Heart left ventricle (tissue), 16 donors: ENCODE measurements at regions of chr4 and their contacts with region 1.

Region 1: DNA sequence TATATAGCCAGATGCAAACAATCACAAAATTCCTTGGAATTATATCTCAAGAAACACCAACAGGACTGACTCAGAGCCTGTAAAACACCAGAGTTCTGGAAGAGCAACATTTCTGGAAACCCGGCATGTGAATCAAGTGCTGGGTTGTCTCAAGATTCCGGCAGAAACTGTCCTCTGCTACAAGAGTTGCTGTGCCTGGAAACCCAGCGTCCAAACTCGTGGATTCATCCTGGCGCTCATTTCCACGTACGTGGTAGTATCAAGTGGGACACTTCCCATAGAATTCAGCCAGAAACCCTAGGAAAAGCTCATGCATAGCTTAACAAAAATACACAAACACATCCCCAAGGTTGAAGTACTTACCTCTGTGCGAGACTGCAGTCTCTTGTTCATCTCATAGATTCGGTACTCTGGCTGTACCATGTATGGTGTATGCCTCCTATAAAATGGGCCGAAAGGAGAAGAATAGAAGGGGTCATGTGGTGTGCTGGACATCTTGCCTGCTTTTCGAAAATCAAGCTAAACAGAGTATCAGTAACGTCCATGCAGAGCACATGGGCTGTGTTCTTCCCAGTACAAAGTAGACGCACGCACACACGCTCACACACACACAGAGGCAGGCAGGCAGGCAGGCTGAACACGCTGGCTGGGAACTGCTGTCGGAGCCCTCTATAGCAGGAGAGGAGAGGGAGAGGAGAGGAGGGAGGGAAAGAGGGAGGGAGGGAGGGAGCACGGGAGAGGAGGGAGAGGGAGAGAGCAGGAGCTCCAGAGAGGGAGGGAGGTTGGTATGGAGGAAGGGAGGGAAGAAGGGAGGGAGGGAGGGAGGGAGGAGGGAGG is at the start of gene LDB2:
- DNase-seq: peak; percentile 67 to 85 (median 78)
- ATAC-seq: peak; percentile 92 to 96 (median 92)
- H3K4me3 ChIP-seq: peak within 1 kb of the TSS; percentile 34 to 87 (median 62)
- H3K27ac ChIP-seq: peak within 1 kb of the TSS; percentile 46 to 87 (median 77)
- H3K4me1 ChIP-seq: peaks cover 0 to 25% (median 5%) of the 10 kb centered on the region in 12 donors
- H3K27me3 ChIP-seq: no peaks in the 10 kb centered on the region
- CTCF ChIP-seq: no peak
- POLR2A ChIP-seq: no peak
- total RNA-seq, gene LDB2: 9.5 to 38.7 (median 26.6) TPM

Region 2: DNA sequence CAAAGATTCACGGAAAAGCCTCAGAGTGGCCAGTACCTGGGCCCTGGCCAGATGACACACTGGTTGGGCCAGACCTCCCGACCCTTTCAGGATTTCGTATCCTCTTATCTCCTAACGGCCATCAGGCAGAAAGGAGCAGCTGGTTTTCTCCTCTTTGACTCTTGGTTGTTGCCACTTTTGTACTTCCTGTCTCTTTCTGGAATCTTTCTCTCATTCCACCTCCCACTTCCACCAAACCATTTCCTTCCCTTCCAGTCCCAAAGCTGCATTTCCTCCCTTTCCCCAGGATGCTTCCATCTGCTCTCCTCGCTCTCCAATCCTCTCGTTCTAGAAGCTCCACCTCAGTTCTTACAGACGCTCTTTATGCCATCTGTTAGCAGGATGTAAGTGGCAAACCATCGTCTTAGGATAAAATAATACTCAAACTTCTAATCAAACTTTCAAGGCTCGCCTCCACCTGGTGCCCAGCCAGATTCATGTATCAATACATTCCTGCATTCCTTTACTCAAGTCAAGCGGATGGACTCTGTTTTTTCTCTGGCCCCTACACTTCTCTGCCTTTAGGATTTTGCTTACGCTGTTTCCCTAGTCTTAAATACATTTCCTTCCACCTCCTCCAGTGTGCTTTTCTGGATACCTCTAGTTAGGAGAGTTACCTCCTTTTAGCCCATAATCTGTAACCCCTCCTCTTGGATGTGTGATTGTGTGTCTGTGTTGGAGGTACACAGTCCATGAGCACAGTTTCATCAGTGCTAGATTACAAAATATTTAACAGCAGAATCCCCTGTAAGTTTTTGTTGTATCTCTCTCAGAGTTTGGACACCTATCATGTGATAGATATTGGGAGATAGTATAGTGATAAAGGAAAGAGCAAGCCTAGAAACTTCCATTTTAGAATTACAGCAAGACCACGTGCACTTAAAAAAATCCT is 70.2 kb before region 1 on chr4:
- intact Hi-C with region 1: loop called in 2 of 10 experiments (anchors 5 to 10 kb)
- DNase-seq: peak in 4 of 5 donors; percentile 14 to 52 (median 35)
- ATAC-seq: peak; percentile 25 to 73 (median 51)
- H3K4me3 ChIP-seq: peak overlapping the region in 2 of 12 donors; percentile 2 to 8
- H3K27ac ChIP-seq: peak overlapping the region; percentile 26 to 75 (median 55)
- H3K4me1 ChIP-seq: peaks cover 0 to 24% (median 11%) of the 10 kb centered on the region in 12 donors
- H3K27me3 ChIP-seq: no peaks in the 10 kb centered on the region
- CTCF ChIP-seq: no peak
- POLR2A ChIP-seq: no peak

Region 3: DNA sequence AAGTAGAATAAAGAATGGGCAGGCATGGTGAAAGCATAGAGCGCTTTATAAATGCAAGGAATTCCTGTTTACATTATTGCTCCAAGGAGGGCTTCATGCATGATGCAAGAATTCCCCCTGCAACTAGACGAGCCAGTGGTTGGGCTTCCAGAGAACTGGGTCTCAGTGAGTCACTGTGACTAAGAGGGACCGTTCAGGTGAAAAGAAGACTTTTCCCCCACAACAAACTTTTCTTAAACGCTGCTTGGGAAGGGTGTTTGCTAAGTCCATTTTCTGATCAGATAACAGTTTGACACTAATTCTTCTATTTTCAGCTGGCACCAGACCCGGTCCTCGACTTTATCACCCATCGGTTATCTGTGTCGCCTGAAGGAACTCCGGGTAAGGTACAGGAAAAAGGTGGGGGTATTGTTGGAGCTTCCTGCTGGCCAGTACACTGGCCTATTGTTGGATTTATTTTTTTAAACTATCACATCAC is 39.9 kb before region 1 on chr4:
- intact Hi-C with region 1: loop called in 2 of 10 experiments (anchors 5 kb)
- DNase-seq: peak in 4 of 5 donors; percentile 39 to 71 (median 61)
- ATAC-seq: peak; percentile 83 to 93 (median 86)
- H3K4me3 ChIP-seq: no peak overlapping the region
- H3K27ac ChIP-seq: peak overlapping the region in 11 of 12 donors; percentile 65 to 91 (median 76)
- H3K4me1 ChIP-seq: peaks cover 0 to 42% (median 6%) of the 10 kb centered on the region in 12 donors
- H3K27me3 ChIP-seq: no peaks in the 10 kb centered on the region
- CTCF ChIP-seq: no peak
- POLR2A ChIP-seq: no peak